ENCODE measurements at regions of chr5 and their contacts with region 1.

Region 1: GRCh38 chr5:1182633-1183423 is 18.6 kb upstream of the SLC6A19 start:
- DNase-seq: peak; percentile 89
- ATAC-seq: peak; percentile 69
- H3K4me3 ChIP-seq: peak overlapping the region; percentile 68 to 79 (median 74); a peak in 5 of 6 replicates
- H3K27ac ChIP-seq: peak overlapping the region; percentile 99
- H3K4me1 ChIP-seq: peaks cover 94% of the 10 kb centered on the region
- H3K27me3 ChIP-seq: no peaks in the 10 kb centered on the region; a peak in 1 of 5 replicates
- CTCF ChIP-seq: no peak
- EP300 ChIP-seq: peak in 1 of 2 experiments; percentile 54; a peak in 2 of 4 replicates
- POLR2A ChIP-seq: peak in 1 of 2 experiments; percentile 83; a peak in 2 of 4 replicates
- RAD21 ChIP-seq: 0 out of 2 replicates have a peak, but pooled peaks have one; percentile 37

Region 2: DNA sequence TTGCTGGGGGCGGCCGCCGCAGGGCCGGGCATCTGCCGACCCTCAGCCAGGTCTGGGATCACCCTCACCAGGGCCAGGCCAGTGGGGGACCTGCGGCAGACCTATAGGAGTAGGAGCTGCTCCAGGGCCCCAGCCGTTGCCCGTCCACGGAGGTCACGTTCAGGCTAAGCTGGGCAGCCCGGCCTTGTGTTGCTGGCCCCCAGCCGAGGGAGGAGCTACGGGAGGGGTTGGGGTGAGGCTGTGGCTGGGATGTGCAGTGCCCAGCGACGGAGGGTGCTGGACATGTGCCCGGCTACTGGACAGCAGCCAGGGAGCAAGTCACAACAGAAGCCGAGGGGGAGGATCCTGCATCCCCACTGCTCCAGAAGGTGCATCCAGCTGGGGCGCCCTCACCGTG is 21.0 kb before region 1 on chr5:
- CTCF ChIA-PET with region 1: no interaction called
- POLR2A ChIA-PET with region 1: interaction called, 18 read pairs
- in situ Hi-C with region 1: no loop called
- intact Hi-C with region 1: no loop called
- DNase-seq: no peak
- ATAC-seq: peak; percentile 34
- H3K4me3 ChIP-seq: peak overlapping the region; percentile 16 to 59 (median 18); a peak in 5 of 6 replicates
- H3K27ac ChIP-seq: peak overlapping the region; percentile 28
- H3K4me1 ChIP-seq: peaks cover 72% of the 10 kb centered on the region
- H3K27me3 ChIP-seq: peaks cover 9 to 53% of the 10 kb centered on the region in 2 experiments; a peak in 4 of 5 replicates
- CTCF ChIP-seq: no peak
- EP300 ChIP-seq: no peak
- POLR2A ChIP-seq: no peak
- RAD21 ChIP-seq: no peak

Region 3: DNA sequence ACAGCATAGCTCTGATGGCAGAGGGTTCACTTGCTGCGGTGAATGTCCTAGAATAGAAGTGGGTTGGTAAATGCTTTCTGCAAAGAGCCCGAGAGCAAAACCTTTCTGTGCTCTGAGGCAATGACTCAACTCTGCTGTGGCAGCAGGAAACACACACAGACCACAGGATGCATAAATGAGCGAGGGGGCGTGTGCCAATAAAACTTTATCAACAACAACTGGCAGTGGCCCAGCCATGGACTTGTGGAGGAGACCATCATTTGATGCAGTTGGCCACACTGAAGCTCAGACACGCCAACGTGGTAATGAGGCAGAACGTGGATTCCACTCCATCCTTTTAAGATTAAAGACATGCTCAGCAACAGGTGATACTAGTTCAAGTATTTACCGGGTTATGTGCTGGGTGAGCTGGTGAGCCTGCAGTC is 610.0 kb after region 1 on chr5:
- CTCF ChIA-PET with region 1: no interaction called
- POLR2A ChIA-PET with region 1: no interaction called
- in situ Hi-C with region 1: no loop called
- intact Hi-C with region 1: no loop called
- DNase-seq: no peak
- ATAC-seq: no peak
- H3K4me3 ChIP-seq: no peak overlapping the region
- H3K27ac ChIP-seq: no peak overlapping the region
- H3K4me1 ChIP-seq: peaks cover 35% of the 10 kb centered on the region
- H3K27me3 ChIP-seq: peaks cover 0 to 33% of the 10 kb centered on the region in 2 experiments; a peak in 3 of 5 replicates
- CTCF ChIP-seq: no peak
- EP300 ChIP-seq: no peak
- POLR2A ChIP-seq: no peak
- RAD21 ChIP-seq: no peak